OCI-LY7 (cell line): ENCODE measurements at regions of chrX and their contacts with region 1.

Region 1: DNA sequence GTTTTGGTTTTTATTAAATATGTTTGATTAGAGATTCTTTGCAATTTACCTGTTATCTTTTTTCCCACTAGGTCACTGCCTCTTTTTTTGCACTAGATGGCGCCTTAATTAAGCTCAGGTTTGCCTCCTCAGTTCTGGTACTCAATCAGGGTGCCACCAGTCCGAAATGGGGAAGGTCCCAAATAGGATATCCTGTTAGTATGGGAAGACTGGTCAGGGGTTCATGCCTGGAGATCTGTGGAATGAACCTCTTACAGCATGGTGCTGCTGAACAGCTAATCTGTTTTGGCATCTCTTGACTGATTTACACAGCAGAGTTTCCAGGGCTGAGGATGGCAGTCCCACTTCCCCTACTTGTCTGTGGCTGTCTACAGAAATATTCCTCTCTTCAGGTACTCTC is 24.2 kb upstream of the VSIG1 start:
- DNase-seq: peak; percentile 27
- H3K4me3 ChIP-seq: no peak overlapping the region
- H3K27ac ChIP-seq: no peak overlapping the region
- H3K4me1 ChIP-seq: no peaks in the 10 kb centered on the region
- CTCF ChIP-seq: peak; percentile 75

Region 2: GRCh38 chrX:108070891-108071290 is 50.3 kb after region 1 on chrX:
- CTCF ChIA-PET with region 1: no interaction called
- POLR2A ChIA-PET with region 1: interaction called, 5 read pairs
- intact Hi-C with region 1: loop called (anchors 1 kb)
- DNase-seq: no peak
- H3K4me3 ChIP-seq: no peak overlapping the region
- H3K27ac ChIP-seq: no peak overlapping the region
- H3K4me1 ChIP-seq: no peaks in the 10 kb centered on the region
- CTCF ChIP-seq: no peak

Region 3: DNA sequence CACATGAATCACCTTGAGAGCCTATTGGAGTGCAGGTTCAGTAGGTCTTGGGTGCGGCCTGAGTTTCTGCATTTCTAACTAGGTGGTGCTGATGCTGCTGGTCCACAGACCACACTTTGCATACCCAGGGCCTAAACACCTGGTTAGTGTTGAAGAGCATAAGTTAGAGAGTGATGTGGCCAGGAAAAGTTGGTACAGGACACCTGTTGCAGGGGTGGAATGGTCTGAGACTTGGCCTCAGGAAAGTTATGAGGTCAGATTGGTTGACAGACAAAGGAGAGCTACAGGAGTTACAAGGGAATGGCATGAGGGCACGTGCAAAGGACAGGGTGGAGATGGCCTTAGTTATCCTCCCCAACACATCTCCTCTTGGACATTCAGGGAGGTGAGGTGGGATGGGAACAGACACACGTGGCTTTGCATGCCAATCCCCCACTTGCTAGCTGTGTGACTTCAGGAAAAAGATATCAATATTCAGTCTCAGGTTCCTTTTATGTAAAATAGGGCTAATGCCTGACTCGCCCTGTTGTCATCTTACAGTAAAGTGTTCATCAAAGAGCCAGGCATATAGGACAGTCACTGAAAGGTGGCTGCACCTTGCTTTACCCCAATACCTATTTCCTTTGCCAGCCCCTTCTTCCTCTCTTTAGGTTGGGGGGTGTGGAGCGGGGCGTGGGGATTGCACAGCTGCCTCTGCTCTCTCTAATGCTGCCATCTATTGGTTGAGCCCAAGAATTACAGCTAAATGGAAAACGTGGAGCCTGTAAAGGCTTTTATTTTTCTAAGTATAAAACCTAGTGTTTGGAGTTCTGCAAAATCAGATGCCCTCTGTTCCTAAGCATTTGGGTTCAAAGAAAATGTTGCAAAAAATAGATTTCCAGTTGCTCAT is 118.4 kb after region 1 on chrX:
- CTCF ChIA-PET with region 1: no interaction called
- POLR2A ChIA-PET with region 1: no interaction called
- intact Hi-C with region 1: loop called (anchors 10 kb)
- DNase-seq: peak; percentile 11
- H3K4me3 ChIP-seq: no peak overlapping the region
- H3K27ac ChIP-seq: no peak overlapping the region
- H3K4me1 ChIP-seq: no peaks in the 10 kb centered on the region
- CTCF ChIP-seq: peak; percentile 73

Region 4: DNA sequence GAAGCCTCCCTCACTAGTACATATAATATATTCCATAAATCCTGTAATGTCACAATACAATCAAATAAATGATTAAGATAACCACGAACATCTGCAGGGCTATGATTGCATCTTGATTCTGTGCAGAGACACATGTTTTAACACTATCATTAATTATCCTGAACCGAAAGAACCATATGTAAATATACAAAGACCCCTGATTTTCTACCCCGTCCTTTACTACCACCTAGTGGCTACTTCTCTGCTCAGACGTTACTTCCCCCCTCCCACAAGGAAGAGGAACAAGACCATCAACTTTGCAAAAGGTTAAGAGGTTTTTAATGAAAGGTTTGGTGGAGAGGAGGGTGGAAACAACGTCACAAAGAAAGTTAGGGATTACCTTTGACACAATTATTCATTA is 283.6 kb after region 1 on chrX:
- CTCF ChIA-PET with region 1: no interaction called
- POLR2A ChIA-PET with region 1: no interaction called
- intact Hi-C with region 1: loop called (anchors 10 kb)
- DNase-seq: peak; percentile 5
- H3K4me3 ChIP-seq: no peak overlapping the region
- H3K27ac ChIP-seq: no peak overlapping the region
- H3K4me1 ChIP-seq: no peaks in the 10 kb centered on the region
- CTCF ChIP-seq: peak; percentile 71